Dendritic cell treated with granulocyte-macrophage colony-stimulating factor and Interleukin-4, amounts not matched to agents 40 ng/mL and 50 ng/mL, for 4 days (primary cell): ENCODE measurements at regions of chr15 and their contacts with region 1.

Region 1: GRCh38 chr15:88476635-88477060 is 9.1 kb downstream of the MRPS11 start:
- H3K4me3 Mint-ChIP-seq: no peak overlapping the region
- H3K27ac Mint-ChIP-seq: no peak overlapping the region
- H3K4me1 Mint-ChIP-seq: peaks cover 2% of the 10 kb centered on the region
- H3K27me3 Mint-ChIP-seq: no peaks in the 10 kb centered on the region

Region 2: GRCh38 chr15:88428805-88429605 is 47.6 kb before region 1 on chr15:
- intact Hi-C with region 1: no loop called
- H3K4me3 Mint-ChIP-seq: no peak overlapping the region
- H3K27ac Mint-ChIP-seq: no peak overlapping the region
- H3K4me1 Mint-ChIP-seq: no peaks in the 10 kb centered on the region
- H3K27me3 Mint-ChIP-seq: peaks cover 10% of the 10 kb centered on the region

Region 3: DNA sequence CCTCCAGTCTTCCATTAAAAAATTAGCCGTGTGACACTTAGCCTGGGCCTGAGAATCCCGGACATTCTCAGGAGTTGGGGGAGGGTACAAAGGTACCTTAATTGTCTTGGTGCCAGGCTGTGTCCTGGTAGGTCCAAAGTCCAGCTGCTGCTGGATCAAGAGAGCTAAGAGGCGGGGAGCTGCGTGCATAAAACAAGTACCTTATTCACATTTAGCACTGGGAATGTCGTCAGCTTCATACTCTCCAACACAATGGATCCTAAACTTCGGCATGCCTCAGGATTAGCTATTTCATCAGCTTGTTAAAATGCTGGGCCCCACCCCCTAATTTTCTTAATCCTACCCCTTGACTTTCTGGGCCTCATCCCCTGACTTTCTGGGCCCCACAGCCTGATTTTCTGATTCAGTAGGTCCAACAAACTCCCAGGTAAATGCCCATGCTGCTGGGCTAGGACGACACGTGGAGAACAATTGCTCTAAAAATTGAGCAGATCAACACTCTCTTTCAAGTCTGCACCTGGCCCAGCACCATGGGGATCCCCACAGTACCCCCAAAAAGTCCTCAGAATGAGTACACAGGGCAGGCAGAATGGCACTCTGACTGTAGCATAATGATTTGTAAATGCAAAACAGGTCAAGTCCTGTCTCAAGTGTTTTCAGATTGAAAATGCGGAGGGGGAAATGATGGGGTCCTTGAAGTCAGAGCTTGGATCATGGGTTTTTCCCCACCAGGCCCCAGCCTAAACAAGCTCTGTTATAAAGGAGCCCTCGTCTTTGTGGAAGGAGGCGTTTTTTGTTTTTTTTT is 138.9 kb after region 1 on chr15:
- intact Hi-C with region 1: loop called (anchors 5 kb)
- H3K4me3 Mint-ChIP-seq: no peak overlapping the region
- H3K27ac Mint-ChIP-seq: no peak overlapping the region
- H3K4me1 Mint-ChIP-seq: peaks cover 11% of the 10 kb centered on the region
- H3K27me3 Mint-ChIP-seq: peaks cover 15% of the 10 kb centered on the region

Region 4: DNA sequence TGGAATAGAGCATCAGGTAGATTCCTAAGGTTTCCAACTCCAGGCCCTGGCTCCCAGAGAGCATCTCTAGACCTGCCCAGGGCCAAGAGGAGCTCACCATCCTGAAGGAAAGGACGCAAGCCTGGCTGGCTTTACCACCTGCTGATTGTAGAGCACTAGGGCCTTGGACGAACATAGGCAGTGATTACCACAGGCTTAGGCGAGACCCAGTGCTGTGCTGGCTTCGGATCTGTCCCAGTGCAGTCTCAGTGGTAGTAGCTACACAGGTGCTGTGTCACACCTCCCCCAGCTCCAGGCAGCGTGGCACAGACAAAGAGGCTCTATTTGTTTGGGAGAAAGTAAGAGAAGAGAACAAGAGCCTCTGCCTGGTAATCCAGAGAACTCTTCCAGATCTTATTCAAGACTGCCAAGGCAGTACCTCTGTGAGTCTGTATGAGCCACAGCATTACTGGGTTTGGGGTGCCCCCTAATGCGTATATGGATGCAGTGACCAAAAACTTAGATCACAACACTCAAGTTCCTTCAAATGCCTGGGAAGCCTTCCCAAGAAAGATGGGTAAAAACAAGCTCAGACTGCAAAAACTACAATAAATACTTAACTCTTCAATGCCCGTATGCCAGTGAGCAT is 187.6 kb after region 1 on chr15:
- intact Hi-C with region 1: no loop called
- H3K4me3 Mint-ChIP-seq: no peak overlapping the region
- H3K27ac Mint-ChIP-seq: no peak overlapping the region
- H3K4me1 Mint-ChIP-seq: no peaks in the 10 kb centered on the region
- H3K27me3 Mint-ChIP-seq: peaks cover 7% of the 10 kb centered on the region

Region 5: GRCh38 chr15:88834211-88834812 is 357.7 kb after region 1 on chr15:
- intact Hi-C with region 1: loop called (anchors 10 kb)
- H3K4me3 Mint-ChIP-seq: no peak overlapping the region
- H3K27ac Mint-ChIP-seq: no peak overlapping the region
- H3K4me1 Mint-ChIP-seq: no peaks in the 10 kb centered on the region
- H3K27me3 Mint-ChIP-seq: no peaks in the 10 kb centered on the region